Naive thymus-derived CD4-positive, alpha-beta T cell (primary cell): ENCODE measurements at regions of chr19 and their contacts with region 1.

Region 1: DNA sequence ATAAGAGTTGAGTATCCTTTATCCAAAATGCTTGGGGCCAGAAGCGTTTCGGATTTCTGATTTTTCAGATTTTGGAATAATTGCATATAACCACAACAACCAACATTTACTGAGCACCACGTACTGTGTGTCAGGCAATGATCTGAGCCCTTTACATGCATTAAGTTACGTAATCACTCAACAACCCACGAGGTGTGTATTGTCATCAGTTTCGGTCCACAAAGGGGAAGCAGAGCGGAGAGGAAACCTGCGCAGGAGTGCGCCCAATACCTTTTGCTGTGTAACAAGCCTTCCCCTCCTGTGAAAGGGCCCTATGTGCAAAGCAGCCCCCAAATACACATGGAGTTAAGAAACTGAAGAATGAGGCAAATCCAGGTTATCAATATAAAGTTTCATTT is 20.7 kb upstream of the NLRP12 start:
- DNase-seq: no peak
- ATAC-seq: peak; percentile 63
- H3K4me3 ChIP-seq: no peak overlapping the region
- H3K4me3 Mint-ChIP-seq: no peak overlapping the region
- H3K27ac ChIP-seq: no peak overlapping the region
- H3K27ac Mint-ChIP-seq: no peak overlapping the region
- H3K4me1 ChIP-seq: peaks cover 0 to 3% of the 10 kb centered on the region in 2 donors
- H3K4me1 Mint-ChIP-seq: peaks cover 0 to 7% (median 5%) of the 10 kb centered on the region in 7 donors
- H3K27me3 ChIP-seq: peaks cover 0 to 4% of the 10 kb centered on the region in 2 donors
- H3K27me3 Mint-ChIP-seq: peaks cover 18 to 30% (median 23%) of the 10 kb centered on the region in 5 donors

Region 2: DNA sequence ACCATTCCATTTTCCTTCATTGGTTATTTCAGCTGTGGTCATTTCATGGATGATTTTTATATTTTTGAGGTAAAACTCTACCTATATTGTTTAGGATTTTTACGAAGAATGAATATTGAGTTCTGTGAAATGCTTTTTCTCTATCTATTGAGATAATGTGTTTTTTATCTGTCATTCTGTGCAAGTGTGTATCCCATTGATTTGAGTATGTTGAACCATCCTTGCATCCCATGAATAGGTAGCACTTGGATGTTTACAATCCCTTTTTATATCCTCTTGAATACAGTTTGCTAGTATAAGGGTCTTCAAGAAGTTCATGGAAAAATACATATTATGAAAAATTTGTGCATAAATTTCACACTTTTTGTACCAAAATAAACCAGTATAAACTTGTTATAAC is 489.1 kb before region 1 on chr19:
- CTCF ChIA-PET with region 1: no interaction called
- POLR2A ChIA-PET with region 1: no interaction called
- intact Hi-C with region 1: no loop called
- DNase-seq: no peak
- ATAC-seq: no peak
- H3K4me3 ChIP-seq: no peak overlapping the region
- H3K4me3 Mint-ChIP-seq: no peak overlapping the region
- H3K27ac ChIP-seq: no peak overlapping the region
- H3K27ac Mint-ChIP-seq: no peak overlapping the region
- H3K4me1 ChIP-seq: no peaks in the 10 kb centered on the region
- H3K4me1 Mint-ChIP-seq: peaks cover 0 to 5% (median 0%) of the 10 kb centered on the region in 7 donors
- H3K27me3 ChIP-seq: no peaks in the 10 kb centered on the region
- H3K27me3 Mint-ChIP-seq: no peaks in the 10 kb centered on the region

Region 3: GRCh38 chr19:53498581-53498980 is 346.3 kb before region 1 on chr19:
- CTCF ChIA-PET with region 1: no interaction called
- POLR2A ChIA-PET with region 1: no interaction called
- intact Hi-C with region 1: no loop called
- DNase-seq: no peak
- ATAC-seq: no peak
- H3K4me3 ChIP-seq: no peak overlapping the region
- H3K4me3 Mint-ChIP-seq: no peak overlapping the region
- H3K27ac ChIP-seq: no peak overlapping the region
- H3K27ac Mint-ChIP-seq: peak overlapping the region in 1 of 9 donors; percentile 51
- H3K4me1 ChIP-seq: no peaks in the 10 kb centered on the region
- H3K4me1 Mint-ChIP-seq: peaks cover 0 to 2% (median 0%) of the 10 kb centered on the region in 7 donors
- H3K27me3 ChIP-seq: no peaks in the 10 kb centered on the region
- H3K27me3 Mint-ChIP-seq: peaks cover 0 to 15% (median 11%) of the 10 kb centered on the region in 5 donors

Region 4: DNA sequence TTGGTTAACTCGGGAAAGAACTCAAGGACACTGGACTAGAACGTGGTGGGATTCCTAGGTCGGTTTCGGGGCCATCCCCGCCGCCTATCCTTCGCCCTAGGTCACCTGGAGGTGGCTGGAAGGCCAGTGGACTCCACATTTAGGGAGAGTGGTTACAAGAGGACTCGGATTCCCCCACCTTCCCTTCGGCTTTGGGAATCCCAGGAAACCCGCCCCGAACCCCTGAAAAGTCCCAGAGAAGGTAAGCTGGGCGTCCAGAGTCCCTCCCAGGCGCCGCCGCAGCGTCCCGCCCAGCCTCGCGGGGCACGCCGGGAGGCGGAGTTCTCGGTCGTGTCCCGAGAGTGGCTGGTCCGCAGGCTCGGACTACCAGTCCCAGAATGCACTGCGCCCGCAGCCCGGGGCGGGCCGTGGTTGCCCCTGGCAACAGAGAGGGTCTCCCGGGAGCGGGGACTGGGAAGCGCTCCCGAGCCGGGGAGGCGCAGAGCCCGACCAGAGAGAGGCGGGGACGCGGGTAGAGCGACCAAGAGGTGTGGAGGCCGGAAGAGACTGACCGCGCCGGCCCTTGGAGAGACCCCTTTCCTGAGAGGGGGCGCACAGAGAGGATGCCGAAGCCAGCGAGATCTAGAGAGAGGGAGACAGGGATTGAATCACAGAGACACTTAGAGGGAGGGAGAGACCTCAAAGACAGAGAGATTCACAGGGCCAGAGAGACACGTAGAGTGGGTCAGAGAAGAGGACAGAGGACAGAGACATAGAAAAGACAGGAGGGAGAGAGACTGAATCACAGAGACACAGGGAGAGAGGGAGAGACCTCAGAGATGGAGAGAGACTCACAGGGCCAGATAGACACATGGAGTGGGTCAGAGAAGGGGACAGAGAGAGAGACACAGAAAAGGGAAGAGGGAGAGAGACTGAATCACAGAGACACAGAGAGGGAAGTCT is 34.6 kb after region 1 on chr19:
- CTCF ChIA-PET with region 1: interaction called, 5 read pairs
- POLR2A ChIA-PET with region 1: no interaction called
- intact Hi-C with region 1: loop called (anchors 1 kb)
- DNase-seq: peak; percentile 66 to 88 (median 78)
- ATAC-seq: peak; percentile 83
- H3K4me3 ChIP-seq: peak overlapping the region; percentile 63
- H3K4me3 Mint-ChIP-seq: no peak overlapping the region
- H3K27ac ChIP-seq: peak overlapping the region; percentile 47
- H3K27ac Mint-ChIP-seq: peak overlapping the region in 6 of 9 donors; percentile 56 to 83 (median 68)
- H3K4me1 ChIP-seq: peaks cover 38 to 63% of the 10 kb centered on the region in 2 donors
- H3K4me1 Mint-ChIP-seq: peaks cover 30 to 62% (median 44%) of the 10 kb centered on the region in 7 donors
- H3K27me3 ChIP-seq: peaks cover 0 to 25% of the 10 kb centered on the region in 2 donors
- H3K27me3 Mint-ChIP-seq: peaks cover 10 to 19% (median 17%) of the 10 kb centered on the region in 5 donors

Region 5: GRCh38 chr19:54096617-54097129 is 251.8 kb after region 1 on chr19:
- CTCF ChIA-PET with region 1: no interaction called
- POLR2A ChIA-PET with region 1: no interaction called
- intact Hi-C with region 1: loop called in 1 of 2 experiments (anchors 1 kb)
- DNase-seq: peak in 3 of 9 donors; percentile 29 to 43 (median 41)
- ATAC-seq: peak; percentile 46
- H3K4me3 ChIP-seq: no peak overlapping the region
- H3K4me3 Mint-ChIP-seq: peak overlapping the region in 9 of 10 donors; percentile 5 to 87 (median 70)
- H3K27ac ChIP-seq: peak overlapping the region; percentile 14
- H3K27ac Mint-ChIP-seq: peak overlapping the region; percentile 7 to 80 (median 60)
- H3K4me1 ChIP-seq: peaks cover 7 to 11% of the 10 kb centered on the region in 2 donors
- H3K4me1 Mint-ChIP-seq: peaks cover 9 to 30% (median 20%) of the 10 kb centered on the region in 7 donors
- H3K27me3 ChIP-seq: no peaks in the 10 kb centered on the region
- H3K27me3 Mint-ChIP-seq: peaks cover 6 to 24% (median 15%) of the 10 kb centered on the region in 5 donors